ENCODE measurements at regions of chr9 and their contacts with region 1.

Region 1: GRCh38 chr9:84170521-84171141 is 169.9 kb downstream of the SLC28A3 start:
- DNase-seq: no peak
- ATAC-seq: no peak
- H3K4me3 Mint-ChIP-seq: no peak overlapping the region
- H3K27ac Mint-ChIP-seq: no peak overlapping the region
- H3K4me1 Mint-ChIP-seq: no peaks in the 10 kb centered on the region
- H3K27me3 Mint-ChIP-seq: no peaks in the 10 kb centered on the region
- CTCF ChIP-seq: no peak

Region 2: GRCh38 chr9:83937911-83938323 is 232.7 kb before region 1 on chr9:
- CTCF ChIA-PET with region 1: interaction called, 6 read pairs
- POLR2A ChIA-PET with region 1: no interaction called
- intact Hi-C with region 1: loop called (anchors 5 kb)
- DNase-seq: peak; percentile 25
- ATAC-seq: peak; percentile 58
- H3K4me3 Mint-ChIP-seq: no peak overlapping the region
- H3K27ac Mint-ChIP-seq: no peak overlapping the region
- H3K4me1 Mint-ChIP-seq: no peaks in the 10 kb centered on the region
- H3K27me3 Mint-ChIP-seq: no peaks in the 10 kb centered on the region
- CTCF ChIP-seq: peak; percentile 83

Region 3: GRCh38 chr9:84139296-84140070 is 31.1 kb before region 1 on chr9:
- CTCF ChIA-PET with region 1: interaction called, 10 read pairs
- POLR2A ChIA-PET with region 1: no interaction called
- intact Hi-C with region 1: no loop called
- DNase-seq: no peak
- ATAC-seq: no peak
- H3K4me3 Mint-ChIP-seq: peak overlapping the region; percentile 46
- H3K27ac Mint-ChIP-seq: no peak overlapping the region
- H3K4me1 Mint-ChIP-seq: peaks cover 8% of the 10 kb centered on the region
- H3K27me3 Mint-ChIP-seq: peaks cover 43% of the 10 kb centered on the region
- CTCF ChIP-seq: no peak

Region 4: GRCh38 chr9:84146893-84147710 is 23.5 kb before region 1 on chr9:
- CTCF ChIA-PET with region 1: interaction called, 17 read pairs
- POLR2A ChIA-PET with region 1: no interaction called
- intact Hi-C with region 1: no loop called
- DNase-seq: no peak
- ATAC-seq: no peak
- H3K4me3 Mint-ChIP-seq: no peak overlapping the region
- H3K27ac Mint-ChIP-seq: no peak overlapping the region
- H3K4me1 Mint-ChIP-seq: no peaks in the 10 kb centered on the region
- H3K27me3 Mint-ChIP-seq: peaks cover 12% of the 10 kb centered on the region
- CTCF ChIP-seq: no peak

Region 5: DNA sequence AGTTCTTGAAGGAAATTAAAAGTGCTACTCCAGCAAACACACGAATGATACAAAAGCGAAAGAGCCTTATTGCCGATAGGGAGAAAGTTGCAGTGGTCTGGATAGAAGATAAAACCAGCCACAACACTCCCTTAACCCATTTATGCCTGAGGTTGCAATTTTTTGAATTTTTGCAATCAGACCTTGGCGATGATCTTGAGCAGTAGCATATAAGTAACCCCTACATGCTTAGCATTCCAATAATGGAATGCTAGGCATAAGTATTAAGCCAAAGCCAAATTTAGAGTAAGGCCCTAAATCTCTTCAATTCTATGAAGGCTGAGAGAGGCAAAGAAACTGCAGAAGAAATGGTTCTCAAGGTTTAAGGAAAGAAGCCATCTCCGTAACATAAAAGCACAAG is 16.5 kb after region 1 on chr9:
- CTCF ChIA-PET with region 1: interaction called, 43 read pairs
- POLR2A ChIA-PET with region 1: no interaction called
- intact Hi-C with region 1: no loop called
- DNase-seq: no peak
- ATAC-seq: no peak
- H3K4me3 Mint-ChIP-seq: no peak overlapping the region
- H3K27ac Mint-ChIP-seq: no peak overlapping the region
- H3K4me1 Mint-ChIP-seq: no peaks in the 10 kb centered on the region
- H3K27me3 Mint-ChIP-seq: peaks cover 10% of the 10 kb centered on the region
- CTCF ChIP-seq: no peak

Region 6: DNA sequence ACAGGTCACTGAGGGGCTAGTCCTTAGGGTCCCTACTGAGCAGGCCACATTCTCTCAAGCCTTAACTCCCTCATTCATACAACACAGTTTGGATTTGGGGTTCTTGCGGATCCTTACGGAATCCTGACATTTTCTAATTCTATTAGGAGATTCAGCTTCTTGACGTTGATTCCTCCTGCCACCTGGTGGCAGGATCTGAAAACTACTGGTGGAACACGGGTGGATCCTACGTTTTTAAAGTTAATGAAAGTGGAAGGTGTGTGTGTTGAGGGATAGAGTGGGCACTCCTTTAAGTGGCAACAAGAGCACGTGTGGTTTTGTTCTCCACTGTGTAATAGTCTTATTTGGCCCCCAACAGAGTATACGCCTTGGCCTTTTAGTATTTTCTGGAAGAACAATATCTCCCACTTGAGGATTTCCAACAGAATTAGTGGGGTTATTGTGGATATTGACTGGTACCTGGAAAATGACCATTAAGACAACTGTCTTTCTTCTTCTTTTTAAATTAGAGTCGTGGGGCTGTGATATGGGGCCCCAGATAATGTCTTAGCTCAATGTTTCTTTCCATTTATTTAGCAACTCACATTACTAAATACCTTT is 144.7 kb after region 1 on chr9:
- CTCF ChIA-PET with region 1: interaction called, 10 read pairs
- POLR2A ChIA-PET with region 1: no interaction called
- intact Hi-C with region 1: no loop called
- DNase-seq: peak; percentile 72
- ATAC-seq: peak; percentile 70
- H3K4me3 Mint-ChIP-seq: no peak overlapping the region
- H3K27ac Mint-ChIP-seq: no peak overlapping the region
- H3K4me1 Mint-ChIP-seq: peaks cover 9% of the 10 kb centered on the region
- H3K27me3 Mint-ChIP-seq: peaks cover 5% of the 10 kb centered on the region
- CTCF ChIP-seq: peak; percentile 89

Measured in activated CD8-positive, alpha-beta T cell treated with anti-CD3 and anti-CD28 coated beads for 36 hours (primary cell).